Activated naive CD4-positive, alpha-beta T cell treated with anti-CD3 and anti-CD28 coated beads for 36 hours (primary cell): ENCODE measurements at regions of chr16 and their contacts with region 1.

Region 1: GRCh38 chr16:57422026-57422944 is 17.7 kb downstream of the CCL17 start:
- DNase-seq: peak; percentile 33
- H3K4me3 Mint-ChIP-seq: no peak overlapping the region
- H3K27ac Mint-ChIP-seq: no peak overlapping the region
- H3K4me1 Mint-ChIP-seq: peaks cover 11% of the 10 kb centered on the region
- H3K27me3 Mint-ChIP-seq: no peaks in the 10 kb centered on the region

Region 2: GRCh38 chr16:57244767-57245471 is 177.4 kb before region 1 on chr16 and contains the start of gene ARL2BP:
- CTCF ChIA-PET with region 1: interaction called, 6 read pairs
- intact Hi-C with region 1: loop called (anchors 1 kb)
- DNase-seq: peak; percentile 98
- H3K4me3 Mint-ChIP-seq: peak within 1 kb of the TSS; percentile 93
- H3K27ac Mint-ChIP-seq: peak within 1 kb of the TSS; percentile 91
- H3K4me1 Mint-ChIP-seq: peaks cover 16% of the 10 kb centered on the region
- H3K27me3 Mint-ChIP-seq: no peaks in the 10 kb centered on the region
- total RNA-seq, gene ARL2BP: 11.0 to 11.2 TPM

Region 3: DNA sequence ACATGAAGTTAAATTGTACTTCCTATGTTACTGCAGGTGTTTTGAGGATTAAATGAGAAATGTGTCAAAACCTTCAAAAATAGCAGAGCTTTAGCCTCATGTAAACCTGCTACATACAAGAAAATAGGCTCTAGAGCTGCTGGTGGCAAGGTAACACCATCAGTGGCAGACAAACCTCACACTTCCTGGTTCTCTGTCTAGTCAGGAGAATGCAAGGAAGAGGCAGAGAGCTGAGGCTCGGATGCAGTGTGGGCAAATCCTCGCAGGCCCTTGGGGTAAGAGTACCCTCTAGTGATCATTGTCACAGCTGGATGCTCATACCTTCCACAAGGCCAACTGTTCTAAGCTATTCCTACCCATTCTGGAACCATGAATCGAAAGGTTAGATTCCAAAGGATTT is 10.7 kb after region 1 on chr16:
- CTCF ChIA-PET with region 1: interaction called, 53 read pairs
- intact Hi-C with region 1: loop called (anchors 1 kb)
- DNase-seq: no peak
- H3K4me3 Mint-ChIP-seq: no peak overlapping the region
- H3K27ac Mint-ChIP-seq: peak overlapping the region; percentile 61
- H3K4me1 Mint-ChIP-seq: peaks cover 25% of the 10 kb centered on the region
- H3K27me3 Mint-ChIP-seq: no peaks in the 10 kb centered on the region

Region 4: DNA sequence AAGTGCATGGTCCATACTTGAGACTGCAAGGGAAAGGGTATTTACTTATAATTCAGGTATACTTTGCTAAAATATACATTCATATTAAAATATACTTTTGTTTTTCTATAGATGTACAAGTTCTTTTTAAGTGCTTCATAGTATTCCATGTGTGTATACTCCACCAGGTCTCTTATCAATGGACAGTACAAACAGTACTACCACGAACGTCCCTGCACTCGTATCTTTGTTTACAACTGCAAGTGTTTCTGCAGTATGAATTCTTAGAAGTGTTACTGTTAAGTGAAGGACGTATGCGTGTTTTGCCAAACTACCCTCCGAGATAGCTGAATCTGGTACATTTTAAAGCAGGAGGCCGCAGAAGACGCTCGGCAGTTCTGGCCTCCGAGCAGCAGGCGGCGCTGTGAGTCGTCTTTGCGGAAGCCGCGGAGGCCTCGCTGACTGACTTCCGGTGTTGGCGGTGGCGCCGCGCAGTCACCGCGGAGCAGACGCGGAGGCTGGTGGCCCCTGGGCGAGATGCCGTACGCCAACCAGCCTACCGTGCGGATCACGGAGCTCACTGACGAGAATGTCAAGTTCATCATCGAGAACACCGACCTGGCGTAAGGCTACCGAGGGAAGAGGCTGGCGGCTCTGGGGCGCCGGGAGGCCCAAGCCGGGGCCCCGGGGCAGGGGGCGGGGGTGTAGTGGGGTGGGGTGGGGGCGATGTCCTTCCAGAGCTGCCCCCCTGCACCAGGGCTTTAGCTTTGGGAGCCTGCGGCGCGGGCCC is 40.1 kb after region 1 on chr16 and contains the start of gene POLR2C:
- CTCF ChIA-PET with region 1: interaction called, 3 read pairs
- intact Hi-C with region 1: loop called (anchors 1 kb)
- DNase-seq: peak; percentile 95
- H3K4me3 Mint-ChIP-seq: peak within 1 kb of the TSS; percentile 100
- H3K27ac Mint-ChIP-seq: peak within 1 kb of the TSS; percentile 99
- H3K4me1 Mint-ChIP-seq: peaks cover 30% of the 10 kb centered on the region
- H3K27me3 Mint-ChIP-seq: no peaks in the 10 kb centered on the region
- total RNA-seq, gene POLR2C: 49.4 to 53.0 TPM

Region 5: DNA sequence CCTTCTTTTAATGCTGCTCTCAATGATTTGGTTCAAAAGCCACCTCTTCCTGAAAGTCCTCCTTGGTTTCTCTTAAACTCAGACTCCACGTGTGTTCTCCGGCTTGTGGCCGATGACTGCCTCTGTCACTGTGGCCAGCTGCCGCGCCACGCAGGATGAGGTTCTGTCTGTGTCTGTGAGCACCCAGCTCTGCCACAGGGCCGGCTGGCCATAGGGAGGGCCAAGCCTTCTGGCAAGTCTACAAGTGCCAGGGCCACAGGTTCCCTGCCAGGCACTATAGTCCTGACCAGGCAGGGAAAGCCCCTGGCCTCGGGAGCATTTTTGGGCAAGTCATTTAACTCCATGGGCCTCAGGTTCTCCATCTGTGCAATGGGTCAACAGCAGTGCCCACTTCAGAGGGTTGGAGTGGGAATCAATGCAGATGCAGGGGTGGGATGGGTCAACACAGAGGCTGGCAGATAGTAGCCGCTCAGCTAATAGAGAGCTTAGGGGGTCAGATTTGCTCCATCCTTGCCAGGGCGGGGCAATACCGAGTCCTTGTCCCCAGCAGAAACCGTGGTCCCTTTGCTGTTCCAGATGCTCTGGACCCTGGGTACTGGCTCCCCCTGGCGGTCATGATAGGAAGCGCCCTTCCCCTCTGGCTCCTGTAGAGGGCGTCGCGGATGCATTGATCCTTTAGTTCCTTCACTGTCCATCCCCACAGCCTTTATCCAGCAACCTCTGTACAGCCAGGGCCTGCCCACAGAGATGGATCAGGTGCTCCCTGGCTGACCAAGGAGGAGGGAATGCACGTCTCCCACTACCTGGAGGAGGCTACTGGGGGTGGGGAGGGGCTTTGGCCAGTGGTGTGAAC is 226.5 kb after region 1 on chr16:
- CTCF ChIA-PET with region 1: no interaction called
- intact Hi-C with region 1: loop called (anchors 1 kb)
- DNase-seq: peak; percentile 93
- H3K4me3 Mint-ChIP-seq: no peak overlapping the region
- H3K27ac Mint-ChIP-seq: peak overlapping the region; percentile 44
- H3K4me1 Mint-ChIP-seq: peaks cover 17% of the 10 kb centered on the region
- H3K27me3 Mint-ChIP-seq: no peaks in the 10 kb centered on the region

Region 6: GRCh38 chr16:58912571-58912970 is 1490.3 kb after region 1 on chr16:
- CTCF ChIA-PET with region 1: no interaction called
- intact Hi-C with region 1: no loop called
- DNase-seq: no peak
- H3K4me3 Mint-ChIP-seq: no peak overlapping the region
- H3K27ac Mint-ChIP-seq: no peak overlapping the region
- H3K4me1 Mint-ChIP-seq: no peaks in the 10 kb centered on the region
- H3K27me3 Mint-ChIP-seq: no peaks in the 10 kb centered on the region